Left ventricle myocardium inferior (tissue), 1 donor: ENCODE measurements at regions of chr4 and their contacts with region 1.

Region 1: GRCh38 chr4:145545538-145546174 is 64.0 kb downstream of the SMAD1 start:
- DNase-seq: no peak
- H3K4me3 ChIP-seq: no peak overlapping the region
- H3K27ac ChIP-seq: peak overlapping the region; percentile 59
- H3K4me1 ChIP-seq: peaks cover 37% of the 10 kb centered on the region
- H3K27me3 ChIP-seq: no peaks in the 10 kb centered on the region
- CTCF ChIP-seq: no peak

Region 2: GRCh38 chr4:145308598-145308997 is 237.1 kb before region 1 on chr4:
- intact Hi-C with region 1: no loop called
- DNase-seq: no peak
- H3K4me3 ChIP-seq: no peak overlapping the region
- H3K27ac ChIP-seq: no peak overlapping the region
- H3K4me1 ChIP-seq: no peaks in the 10 kb centered on the region
- H3K27me3 ChIP-seq: no peaks in the 10 kb centered on the region
- CTCF ChIP-seq: no peak

Region 3: DNA sequence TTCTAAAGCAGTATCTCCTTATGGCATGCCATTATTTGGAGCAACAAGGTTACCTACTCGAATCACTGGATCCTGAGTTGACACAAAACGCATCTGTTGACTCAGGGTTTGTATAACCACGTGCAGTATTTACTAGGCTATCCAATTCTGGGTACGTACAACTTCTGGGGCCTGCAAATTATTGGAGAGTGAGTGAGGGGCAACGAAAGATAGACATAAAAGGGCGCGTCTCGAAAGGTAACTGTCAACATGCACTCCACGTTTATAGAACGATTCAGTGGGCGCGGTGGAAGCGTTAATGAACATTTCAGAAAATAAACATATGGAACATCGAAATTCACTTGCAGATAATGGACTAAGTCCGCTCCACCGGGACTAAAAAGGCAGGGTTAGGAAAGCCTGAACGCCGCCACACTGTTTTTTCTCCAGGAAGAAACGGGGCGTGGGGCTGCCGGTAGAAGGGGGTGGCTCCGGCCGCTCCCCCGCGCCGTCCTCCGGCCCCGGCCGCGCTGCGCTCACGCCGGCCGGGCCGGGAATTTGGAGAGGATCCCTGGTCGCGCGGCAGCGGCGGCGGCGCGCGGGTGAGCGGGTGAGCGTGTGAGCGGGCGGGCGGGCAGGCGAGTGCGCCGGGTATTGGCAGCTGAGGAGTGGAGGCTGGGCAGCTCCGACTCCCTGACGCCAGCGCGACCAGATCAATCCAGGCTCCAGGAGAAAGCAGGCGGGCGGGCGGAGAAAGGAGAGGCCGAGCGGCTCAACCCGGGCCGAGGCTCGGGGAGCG is 64.3 kb before region 1 on chr4 and contains the start of gene SMAD1:
- intact Hi-C with region 1: loop called (anchors 10 kb)
- DNase-seq: peak; percentile 86
- H3K4me3 ChIP-seq: peak within 1 kb of the TSS; percentile 75
- H3K27ac ChIP-seq: peak within 1 kb of the TSS; percentile 95
- H3K4me1 ChIP-seq: peaks cover 47% of the 10 kb centered on the region
- H3K27me3 ChIP-seq: no peaks in the 10 kb centered on the region
- CTCF ChIP-seq: no peak
- total RNA-seq, gene SMAD1: 10.1 TPM